ENCODE measurements at regions of chrX and their contacts with region 1.

Region 1: DNA sequence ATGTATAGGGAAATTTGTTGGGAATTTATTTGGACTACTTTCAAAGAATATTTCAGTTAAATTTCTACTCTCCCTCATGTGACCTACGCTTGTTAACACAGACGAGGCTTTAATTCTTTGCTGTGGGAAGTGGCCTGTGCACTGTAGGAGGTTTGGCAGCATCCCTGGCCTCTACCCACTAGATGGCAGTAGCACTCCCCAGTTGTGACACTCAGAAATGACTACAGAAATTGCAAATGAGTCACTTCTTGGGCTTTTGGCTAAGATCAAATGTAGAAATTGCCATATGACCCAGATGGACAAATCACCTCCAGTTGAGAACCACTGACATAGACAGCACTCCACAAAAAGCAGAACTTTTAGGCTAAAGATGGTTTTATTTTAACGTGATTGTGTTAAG is 22.1 kb downstream of the PIR start:
- DNase-seq: peak; percentile 53
- ATAC-seq: peak; percentile 49
- H3K4me3 ChIP-seq: no peak overlapping the region
- H3K4me3 Mint-ChIP-seq: no peak overlapping the region
- H3K27ac ChIP-seq: no peak overlapping the region
- H3K27ac Mint-ChIP-seq: no peak overlapping the region
- H3K4me1 ChIP-seq: no peaks in the 10 kb centered on the region
- H3K4me1 Mint-ChIP-seq: peaks cover 2% of the 10 kb centered on the region
- H3K27me3 ChIP-seq: no peaks in the 10 kb centered on the region
- H3K27me3 Mint-ChIP-seq: peaks cover 3% of the 10 kb centered on the region
- CTCF ChIP-seq: peak; percentile 66

Region 2: GRCh38 chrX:13790206-13791131 is 1680.5 kb before region 1 on chrX:
- CTCF ChIA-PET with region 1: no interaction called
- POLR2A ChIA-PET with region 1: no interaction called
- intact Hi-C with region 1: no loop called
- DNase-seq: no peak
- ATAC-seq: no peak
- H3K4me3 ChIP-seq: no peak overlapping the region
- H3K4me3 Mint-ChIP-seq: no peak overlapping the region
- H3K27ac ChIP-seq: no peak overlapping the region
- H3K27ac Mint-ChIP-seq: no peak overlapping the region
- H3K4me1 ChIP-seq: no peaks in the 10 kb centered on the region
- H3K4me1 Mint-ChIP-seq: no peaks in the 10 kb centered on the region
- H3K27me3 ChIP-seq: no peaks in the 10 kb centered on the region
- H3K27me3 Mint-ChIP-seq: no peaks in the 10 kb centered on the region
- CTCF ChIP-seq: no peak

Region 3: DNA sequence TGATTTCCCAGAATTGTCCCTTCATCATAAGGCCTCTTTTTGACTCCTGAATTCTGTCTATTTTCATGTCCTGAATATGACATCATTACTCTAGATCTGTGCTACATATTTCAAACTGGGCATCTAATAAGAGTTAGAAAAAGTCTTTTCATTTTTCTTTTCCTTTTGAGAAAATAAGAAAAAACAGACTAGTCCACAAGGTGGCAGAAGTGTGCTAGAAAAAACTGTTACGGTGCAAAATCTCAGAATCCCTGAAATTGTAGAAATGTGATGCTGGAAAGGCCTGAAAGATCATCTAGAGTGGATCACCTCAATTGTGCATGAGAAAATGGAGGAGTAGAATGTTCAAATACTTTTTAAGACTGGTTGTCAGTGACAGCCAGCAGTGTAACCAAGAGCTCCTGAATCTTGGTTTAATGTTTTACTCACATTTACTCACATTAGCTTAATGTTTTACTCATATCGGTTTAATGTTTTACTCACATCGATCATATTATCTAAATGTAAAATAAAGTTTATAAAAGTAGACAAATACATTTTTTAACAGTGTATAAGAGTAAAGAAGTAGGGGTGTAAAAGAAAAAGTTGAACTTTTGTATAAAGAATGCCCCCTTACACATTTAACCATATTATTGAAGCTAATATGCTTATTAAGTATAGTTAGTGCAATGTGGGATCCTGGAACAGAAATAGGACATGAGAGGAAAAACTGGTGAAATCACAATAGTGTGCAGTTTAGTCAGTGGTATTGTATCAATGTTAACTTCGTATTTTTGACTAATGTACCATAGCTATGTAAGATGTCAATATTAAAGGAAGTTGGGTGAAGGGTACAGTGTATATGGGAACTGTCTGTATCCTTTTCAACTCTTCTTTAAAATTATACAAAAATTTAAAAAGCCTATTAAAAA is 170.8 kb before region 1 on chrX:
- CTCF ChIA-PET with region 1: interaction called, 16 read pairs
- POLR2A ChIA-PET with region 1: no interaction called
- intact Hi-C with region 1: loop called (anchors 1 kb)
- DNase-seq: peak; percentile 5
- ATAC-seq: no peak
- H3K4me3 ChIP-seq: no peak overlapping the region
- H3K4me3 Mint-ChIP-seq: no peak overlapping the region
- H3K27ac ChIP-seq: no peak overlapping the region
- H3K27ac Mint-ChIP-seq: no peak overlapping the region
- H3K4me1 ChIP-seq: no peaks in the 10 kb centered on the region
- H3K4me1 Mint-ChIP-seq: no peaks in the 10 kb centered on the region
- H3K27me3 ChIP-seq: no peaks in the 10 kb centered on the region
- H3K27me3 Mint-ChIP-seq: no peaks in the 10 kb centered on the region
- CTCF ChIP-seq: peak; percentile 45

Region 4: DNA sequence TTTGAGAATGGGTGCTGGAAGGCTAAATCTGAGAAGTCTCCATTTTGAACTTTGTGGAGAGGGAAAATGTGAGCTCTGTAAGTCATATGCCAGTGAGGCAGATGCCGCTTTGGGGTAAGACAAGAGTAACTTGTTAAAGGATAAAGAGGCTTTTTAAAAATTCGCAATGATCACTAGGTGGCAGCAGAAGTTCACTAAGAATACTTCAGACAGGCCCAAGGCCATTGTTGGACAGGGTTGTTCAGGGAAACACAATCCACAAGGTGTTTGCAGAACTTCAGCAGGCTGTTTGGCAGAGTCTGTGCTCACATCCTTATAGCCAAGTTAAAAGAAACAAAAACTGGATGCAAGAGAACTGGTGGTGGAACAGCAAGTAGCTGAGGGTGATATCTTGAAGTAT is 122.0 kb before region 1 on chrX:
- CTCF ChIA-PET with region 1: interaction called, 36 read pairs
- POLR2A ChIA-PET with region 1: no interaction called
- intact Hi-C with region 1: loop called (anchors 1 kb)
- DNase-seq: peak; percentile 48
- ATAC-seq: peak; percentile 31
- H3K4me3 ChIP-seq: no peak overlapping the region
- H3K4me3 Mint-ChIP-seq: no peak overlapping the region
- H3K27ac ChIP-seq: no peak overlapping the region
- H3K27ac Mint-ChIP-seq: no peak overlapping the region
- H3K4me1 ChIP-seq: no peaks in the 10 kb centered on the region
- H3K4me1 Mint-ChIP-seq: no peaks in the 10 kb centered on the region
- H3K27me3 ChIP-seq: peaks cover 0 to 4% (median 0%) of the 10 kb centered on the region in 4 experiments
- H3K27me3 Mint-ChIP-seq: peaks cover 1% of the 10 kb centered on the region
- CTCF ChIP-seq: peak; percentile 49

Region 5: DNA sequence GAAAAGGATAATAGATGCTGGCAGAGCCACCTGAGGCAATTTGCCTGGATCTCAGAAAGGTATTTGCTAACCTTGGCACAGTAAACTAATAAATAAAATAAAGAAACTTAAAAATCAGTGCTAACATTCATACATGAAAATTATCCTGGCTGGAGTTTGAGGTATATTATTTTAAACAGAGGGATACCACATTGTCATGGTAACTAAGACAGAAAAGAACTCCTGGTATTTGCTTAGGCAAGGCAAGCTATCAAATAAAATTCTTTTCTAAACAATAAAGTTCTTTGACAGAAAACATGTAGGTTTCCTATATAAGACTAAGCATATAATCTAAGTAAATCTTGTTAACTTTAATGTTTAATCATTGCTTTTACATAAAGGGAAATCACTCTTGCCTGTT is 915.1 kb after region 1 on chrX:
- CTCF ChIA-PET with region 1: no interaction called
- POLR2A ChIA-PET with region 1: no interaction called
- intact Hi-C with region 1: no loop called
- DNase-seq: no peak
- ATAC-seq: no peak
- H3K4me3 ChIP-seq: no peak overlapping the region
- H3K4me3 Mint-ChIP-seq: no peak overlapping the region
- H3K27ac ChIP-seq: no peak overlapping the region
- H3K27ac Mint-ChIP-seq: no peak overlapping the region
- H3K4me1 ChIP-seq: no peaks in the 10 kb centered on the region
- H3K4me1 Mint-ChIP-seq: no peaks in the 10 kb centered on the region
- H3K27me3 ChIP-seq: no peaks in the 10 kb centered on the region
- H3K27me3 Mint-ChIP-seq: no peaks in the 10 kb centered on the region
- CTCF ChIP-seq: no peak